K562 (cell line): ENCODE measurements at regions of chr1 and their contacts with region 1.

Region 1: GRCh38 chr1:156740679-156741612 is at the start of gene MRPL24:
- DNase-seq: peak; percentile 81 to 99 (median 90)
- ATAC-seq: peak; percentile 95
- H3K4me3 ChIP-seq: peak within 1 kb of the TSS; percentile 63
- H3K27ac ChIP-seq: peak within 1 kb of the TSS; percentile 82
- H3K4me1 ChIP-seq: peaks cover 24 to 26% of the 10 kb centered on the region in 2 experiments
- H3K27me3 ChIP-seq: no peaks in the 10 kb centered on the region
- CTCF ChIP-seq: no peak; a peak in 1 of 6 replicates
- EP300 ChIP-seq: peak; percentile 31
- POLR2A ChIP-seq: peak; percentile 81
- RAD21 ChIP-seq: peak in 1 of 2 experiments; percentile 12; a peak in 1 of 4 replicates
- polyA plus RNA-seq, gene MRPL24: 206 to 267 TPM

Region 2: GRCh38 chr1:155308493-155309422 is 1432.2 kb before region 1 on chr1 and contains the start of gene FDPS:
- CTCF ChIA-PET with region 1: no interaction called
- POLR2A ChIA-PET with region 1: no interaction called
- in situ Hi-C with region 1: loop called (anchors 25 kb)
- intact Hi-C with region 1: no loop called
- DNase-seq: peak; percentile 97 to 100 (median 98)
- ATAC-seq: peak; percentile 97
- H3K4me3 ChIP-seq: peak within 1 kb of the TSS; percentile 75
- H3K27ac ChIP-seq: peak within 1 kb of the TSS; percentile 93
- H3K4me1 ChIP-seq: peaks cover 23 to 35% of the 10 kb centered on the region in 2 experiments; a peak in 4 of 5 replicates
- H3K27me3 ChIP-seq: no peaks in the 10 kb centered on the region
- CTCF ChIP-seq: 0 out of 6 replicates have a peak, but pooled peaks of 1 of the 3 experiments have one; percentile 1
- EP300 ChIP-seq: no peak
- POLR2A ChIP-seq: peak; percentile 89
- RAD21 ChIP-seq: no peak
- polyA plus RNA-seq, gene FDPS: 864 to 884 TPM

Region 3: DNA sequence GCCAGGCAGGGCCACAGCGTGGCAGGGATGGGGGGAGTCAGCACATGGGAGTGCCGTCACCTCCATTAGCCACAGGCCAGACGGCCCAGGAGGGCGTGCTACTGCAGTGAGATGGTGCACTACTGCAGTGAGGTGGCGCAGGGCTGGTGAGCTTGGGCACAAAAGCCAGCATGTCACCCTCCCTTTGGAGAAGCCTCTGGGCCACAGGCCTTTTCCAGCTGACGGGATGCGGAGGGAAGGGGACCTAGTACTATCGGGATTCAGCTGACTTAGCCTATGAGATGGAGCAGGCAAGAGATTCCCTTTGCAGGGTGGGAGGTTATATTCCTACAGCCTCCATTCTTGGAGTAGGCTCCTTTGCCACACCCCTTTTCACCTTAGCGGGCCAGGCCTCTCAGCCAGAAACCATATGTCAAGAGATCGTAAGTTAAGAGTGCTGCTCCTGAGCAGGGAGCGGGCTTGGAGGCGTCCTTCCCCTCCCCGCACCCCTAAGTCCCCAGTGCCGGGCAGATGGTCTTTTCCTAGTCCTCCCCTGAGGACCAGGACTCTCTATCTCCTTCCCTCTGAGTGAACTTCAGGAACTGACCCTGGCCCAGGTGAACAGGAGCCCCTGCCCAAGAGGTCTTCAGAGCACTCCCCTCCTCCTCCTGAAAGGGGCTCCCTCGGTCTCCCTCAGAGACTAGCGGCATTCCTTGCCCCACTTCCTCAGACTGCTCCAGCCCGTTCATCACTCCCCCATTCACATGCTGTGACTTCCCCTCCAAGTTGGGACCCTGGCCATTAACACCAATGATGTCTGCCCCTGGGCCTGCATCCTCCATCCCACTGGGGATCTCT is 71.9 kb before region 1 on chr1:
- CTCF ChIA-PET with region 1: no interaction called
- POLR2A ChIA-PET with region 1: no interaction called
- in situ Hi-C with region 1: no loop called
- intact Hi-C with region 1: no loop called
- DNase-seq: peak in 1 of 4 experiments; percentile 30
- ATAC-seq: peak; percentile 22; the same call in 2 of the 3 replicates
- H3K4me3 ChIP-seq: no peak overlapping the region
- H3K27ac ChIP-seq: no peak overlapping the region
- H3K4me1 ChIP-seq: peaks cover 27 to 73% of the 10 kb centered on the region in 2 experiments
- H3K27me3 ChIP-seq: no peaks in the 10 kb centered on the region
- CTCF ChIP-seq: no peak
- EP300 ChIP-seq: no peak
- POLR2A ChIP-seq: no peak
- RAD21 ChIP-seq: no peak

Region 4: DNA sequence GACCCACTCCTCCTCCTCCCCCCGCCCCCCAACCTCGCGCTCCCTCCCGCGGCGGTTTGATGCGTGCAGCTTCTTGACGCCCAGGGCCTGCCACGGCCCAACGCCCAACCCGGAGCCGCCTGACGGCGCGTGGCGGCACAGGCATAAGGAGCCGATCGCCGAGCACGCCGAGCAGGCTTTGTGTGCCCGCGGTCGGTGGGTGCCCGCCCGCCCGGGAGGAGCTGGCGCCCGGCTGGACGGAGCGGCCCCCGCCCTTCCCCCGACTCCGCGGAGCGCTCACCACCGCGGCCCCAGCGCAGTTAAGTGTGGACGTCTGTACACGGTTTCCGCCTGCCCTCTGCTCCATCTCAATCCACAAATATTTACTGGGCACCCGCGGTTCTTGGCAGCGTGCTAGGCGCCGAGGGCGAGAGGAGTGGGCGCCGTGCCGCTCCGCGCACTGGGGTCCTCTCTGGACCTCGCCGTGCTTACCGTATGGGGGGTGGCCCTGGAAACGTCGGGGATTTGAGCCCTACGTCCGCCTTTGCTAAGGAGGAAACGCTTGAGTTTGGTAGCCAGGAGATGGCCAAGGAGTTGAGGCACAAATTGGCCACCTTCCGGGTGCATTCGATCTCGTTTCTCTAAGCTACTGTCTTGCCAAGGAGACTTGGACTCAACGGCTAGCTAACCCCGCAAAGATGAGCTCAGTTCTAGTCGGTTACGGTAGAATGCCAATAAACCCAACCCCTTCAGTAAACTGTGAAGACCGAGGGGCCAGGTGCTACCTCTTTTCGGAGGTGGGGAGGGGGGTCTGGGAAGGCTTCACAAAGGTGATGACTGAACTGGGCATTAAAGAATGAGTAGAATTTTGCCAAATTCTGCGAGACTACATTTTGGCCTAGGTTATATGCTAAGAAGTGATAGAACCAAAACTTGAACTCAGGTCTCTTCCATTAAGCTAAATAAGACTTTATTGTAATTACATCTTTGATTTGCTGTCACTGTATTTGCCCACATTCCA is 11.1 kb after region 1 on chr1:
- CTCF ChIA-PET with region 1: no interaction called
- POLR2A ChIA-PET with region 1: interaction called, 30 read pairs
- in situ Hi-C with region 1: no loop called
- intact Hi-C with region 1: no loop called
- DNase-seq: peak; percentile 90 to 98 (median 94)
- ATAC-seq: peak; percentile 78
- H3K4me3 ChIP-seq: peak overlapping the region; percentile 95
- H3K27ac ChIP-seq: peak overlapping the region; percentile 89
- H3K4me1 ChIP-seq: peaks cover 35 to 36% of the 10 kb centered on the region in 2 experiments
- H3K27me3 ChIP-seq: no peaks in the 10 kb centered on the region
- CTCF ChIP-seq: peak in 1 of 3 experiments; percentile 26; a peak in 1 of 6 replicates
- EP300 ChIP-seq: peak; percentile 35; the same call in 1 of the 2 replicates
- POLR2A ChIP-seq: peak; percentile 64
- RAD21 ChIP-seq: no peak

Region 5: GRCh38 chr1:156767101-156767878 is 26.3 kb after region 1 on chr1 and contains the start of gene PRCC:
- CTCF ChIA-PET with region 1: no interaction called
- POLR2A ChIA-PET with region 1: interaction called, 8 read pairs
- in situ Hi-C with region 1: no loop called
- intact Hi-C with region 1: loop called (anchors 1 kb)
- DNase-seq: peak; percentile 87 to 99 (median 89)
- ATAC-seq: peak; percentile 94
- H3K4me3 ChIP-seq: peak within 1 kb of the TSS; percentile 88
- H3K27ac ChIP-seq: peak within 1 kb of the TSS; percentile 84
- H3K4me1 ChIP-seq: peaks cover 17 to 22% of the 10 kb centered on the region in 2 experiments; a peak in 3 of 5 replicates
- H3K27me3 ChIP-seq: no peaks in the 10 kb centered on the region
- CTCF ChIP-seq: peak in 1 of 3 experiments; percentile 19; a peak in 2 of 6 replicates
- EP300 ChIP-seq: 0 out of 2 replicates have a peak, but pooled peaks have one; percentile 2
- POLR2A ChIP-seq: peak; percentile 79
- RAD21 ChIP-seq: 0 out of 4 replicates have a peak, but pooled peaks of 1 of the 2 experiments have one; percentile 3
- polyA plus RNA-seq, gene PRCC: 23.9 to 25.5 TPM

Region 6: DNA sequence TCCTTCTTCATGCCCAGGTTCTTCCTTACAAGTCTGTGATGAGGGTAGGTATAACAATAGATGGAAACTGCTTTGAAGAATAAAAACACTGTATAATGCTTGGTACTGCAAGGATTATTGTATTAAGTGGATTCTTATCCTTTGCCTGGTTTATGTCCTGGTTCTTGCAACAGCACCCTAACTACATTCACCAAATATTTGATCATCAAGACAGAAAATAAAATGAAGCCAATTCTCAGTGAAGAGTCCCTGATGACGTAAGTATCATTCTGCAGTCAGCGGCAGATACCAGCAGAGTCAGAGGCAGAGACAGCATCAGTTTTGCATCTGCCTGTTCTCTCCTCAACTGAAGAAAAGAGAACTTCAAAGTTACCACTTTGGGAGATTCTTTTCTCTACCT is 284.9 kb after region 1 on chr1:
- CTCF ChIA-PET with region 1: no interaction called
- POLR2A ChIA-PET with region 1: no interaction called
- in situ Hi-C with region 1: no loop called
- intact Hi-C with region 1: no loop called
- DNase-seq: no peak
- ATAC-seq: no peak
- H3K4me3 ChIP-seq: no peak overlapping the region
- H3K27ac ChIP-seq: no peak overlapping the region
- H3K4me1 ChIP-seq: no peaks in the 10 kb centered on the region; a peak in 1 of 5 replicates
- H3K27me3 ChIP-seq: no peaks in the 10 kb centered on the region
- CTCF ChIP-seq: no peak
- EP300 ChIP-seq: no peak
- POLR2A ChIP-seq: no peak
- RAD21 ChIP-seq: no peak